Tibial artery (tissue), 4 donors: ENCODE measurements at regions of chr1 and their contacts with region 1.

Region 1: GRCh38 chr1:40951943-40952743 is 27.4 kb upstream of the CTPS1 start:
- DNase-seq: peak; percentile 59 to 80
- H3K4me3 ChIP-seq: no peak overlapping the region
- H3K27ac ChIP-seq: no peak overlapping the region
- H3K4me1 ChIP-seq: peaks cover 0 to 19% (median 13%) of the 10 kb centered on the region in 4 donors
- H3K27me3 ChIP-seq: no peaks in the 10 kb centered on the region
- CTCF ChIP-seq: peak; percentile 92 to 94

Region 2: GRCh38 chr1:40625066-40625465 is 327.1 kb before region 1 on chr1:
- intact Hi-C with region 1: loop called (anchors 10 kb)
- DNase-seq: peak in 1 of 2 donors; percentile 32
- H3K4me3 ChIP-seq: no peak overlapping the region
- H3K27ac ChIP-seq: no peak overlapping the region
- H3K4me1 ChIP-seq: no peaks in the 10 kb centered on the region
- H3K27me3 ChIP-seq: no peaks in the 10 kb centered on the region
- CTCF ChIP-seq: no peak

Region 3: GRCh38 chr1:40774266-40774998 is 177.7 kb before region 1 on chr1:
- intact Hi-C with region 1: loop called (anchors 10 kb)
- DNase-seq: peak in 1 of 2 donors; percentile 66
- H3K4me3 ChIP-seq: no peak overlapping the region
- H3K27ac ChIP-seq: no peak overlapping the region
- H3K4me1 ChIP-seq: peaks cover 0 to 14% (median 3%) of the 10 kb centered on the region in 4 donors
- H3K27me3 ChIP-seq: no peaks in the 10 kb centered on the region
- CTCF ChIP-seq: peak; percentile 66 to 77

Region 4: GRCh38 chr1:40849801-40850592 is 102.1 kb before region 1 on chr1:
- intact Hi-C with region 1: loop called (anchors 2 kb)
- DNase-seq: peak; percentile 76 to 80
- H3K4me3 ChIP-seq: no peak overlapping the region
- H3K27ac ChIP-seq: no peak overlapping the region
- H3K4me1 ChIP-seq: peaks cover 0 to 15% (median 7%) of the 10 kb centered on the region in 4 donors
- H3K27me3 ChIP-seq: no peaks in the 10 kb centered on the region
- CTCF ChIP-seq: peak; percentile 92 to 93

Region 5: GRCh38 chr1:40862008-40862863 is 89.9 kb before region 1 on chr1 and contains the start of gene CITED4:
- intact Hi-C with region 1: loop called (anchors 5 kb)
- DNase-seq: peak; percentile 94 to 96
- H3K4me3 ChIP-seq: peak within 1 kb of the TSS; percentile 83 to 91
- H3K27ac ChIP-seq: peak within 1 kb of the TSS; percentile 83 to 95
- H3K4me1 ChIP-seq: peaks cover 0 to 32% (median 21%) of the 10 kb centered on the region in 4 donors
- H3K27me3 ChIP-seq: no peaks in the 10 kb centered on the region
- CTCF ChIP-seq: peak; percentile 17 to 28

Region 6: GRCh38 chr1:40971966-40972365 is 19.8 kb after region 1 on chr1:
- intact Hi-C with region 1: no loop called
- DNase-seq: peak in 1 of 2 donors; percentile 23
- H3K4me3 ChIP-seq: no peak overlapping the region
- H3K27ac ChIP-seq: no peak overlapping the region
- H3K4me1 ChIP-seq: peaks cover 0 to 21% (median 9%) of the 10 kb centered on the region in 4 donors
- H3K27me3 ChIP-seq: no peaks in the 10 kb centered on the region
- CTCF ChIP-seq: no peak